ENCODE measurements at regions of chr1 and their contacts with region 1.

Region 1: GRCh38 chr1:243837907-243838535 is 12.0 kb downstream of the AKT3 start:
- DNase-seq: peak in 7 of 9 donors; percentile 22 to 72 (median 49)
- ATAC-seq: peak; percentile 88
- H3K4me3 ChIP-seq: no peak overlapping the region
- H3K4me3 Mint-ChIP-seq: peak overlapping the region in 9 of 10 donors; percentile 22 to 74 (median 58)
- H3K27ac ChIP-seq: peak overlapping the region; percentile 40
- H3K27ac Mint-ChIP-seq: peak overlapping the region; percentile 65 to 94 (median 83)
- H3K4me1 ChIP-seq: peaks cover 10 to 29% of the 10 kb centered on the region in 2 donors
- H3K4me1 Mint-ChIP-seq: peaks cover 14 to 73% (median 59%) of the 10 kb centered on the region in 7 donors
- H3K27me3 ChIP-seq: no peaks in the 10 kb centered on the region
- H3K27me3 Mint-ChIP-seq: no peaks in the 10 kb centered on the region

Region 2: DNA sequence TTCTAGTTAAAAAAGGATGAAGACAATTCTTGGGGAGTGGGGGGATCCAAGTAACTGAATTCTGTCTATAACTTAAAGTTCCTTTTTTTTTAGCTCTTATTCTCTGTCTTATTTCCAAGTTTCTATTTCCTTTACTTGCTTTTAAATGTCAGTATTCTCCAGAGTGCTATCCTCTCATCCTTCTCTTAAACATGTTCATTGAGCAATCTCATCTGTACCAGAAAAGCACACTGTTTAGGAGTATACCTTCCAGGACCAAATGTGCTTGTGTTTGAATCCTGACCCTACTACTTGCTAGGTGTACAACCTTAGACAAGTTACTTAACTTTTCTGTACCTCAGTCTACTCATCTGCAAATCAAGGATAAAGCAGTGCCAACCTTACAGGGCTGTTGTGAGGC is 38.1 kb before region 1 on chr1:
- CTCF ChIA-PET with region 1: no interaction called
- POLR2A ChIA-PET with region 1: no interaction called
- intact Hi-C with region 1: loop called in 1 of 2 experiments (anchors 5 kb)
- DNase-seq: no peak
- ATAC-seq: no peak
- H3K4me3 ChIP-seq: no peak overlapping the region
- H3K4me3 Mint-ChIP-seq: no peak overlapping the region
- H3K27ac ChIP-seq: no peak overlapping the region
- H3K27ac Mint-ChIP-seq: peak overlapping the region in 2 of 9 donors; percentile 4 to 23
- H3K4me1 ChIP-seq: no peaks in the 10 kb centered on the region
- H3K4me1 Mint-ChIP-seq: peaks cover 19 to 74% (median 56%) of the 10 kb centered on the region in 7 donors
- H3K27me3 ChIP-seq: no peaks in the 10 kb centered on the region
- H3K27me3 Mint-ChIP-seq: no peaks in the 10 kb centered on the region

Region 3: DNA sequence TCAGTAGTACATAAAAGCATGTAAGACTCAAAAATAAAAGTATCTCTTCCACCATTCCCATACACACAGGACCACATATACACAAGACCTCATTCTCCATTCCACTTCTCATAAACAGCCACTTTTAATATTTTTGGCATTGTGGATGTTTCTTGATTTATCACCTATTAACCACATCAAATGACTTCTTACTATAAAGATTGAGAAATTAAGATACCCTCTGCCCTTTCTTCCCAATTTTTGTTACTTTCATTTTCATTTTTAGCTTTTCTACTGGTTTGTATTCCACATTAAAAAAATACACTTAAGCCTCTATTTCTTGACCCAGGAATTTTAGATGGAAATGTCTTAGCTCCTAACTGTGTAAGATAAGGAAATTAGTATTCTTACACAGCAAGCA is 10.8 kb before region 1 on chr1:
- CTCF ChIA-PET with region 1: no interaction called
- POLR2A ChIA-PET with region 1: interaction called, 5 read pairs
- intact Hi-C with region 1: loop called in 1 of 2 experiments (anchors 2 kb)
- DNase-seq: no peak
- ATAC-seq: no peak
- H3K4me3 ChIP-seq: no peak overlapping the region
- H3K4me3 Mint-ChIP-seq: peak overlapping the region in 9 of 10 donors; percentile 29 to 71 (median 50)
- H3K27ac ChIP-seq: no peak overlapping the region
- H3K27ac Mint-ChIP-seq: peak overlapping the region in 3 of 9 donors; percentile 33 to 78 (median 52)
- H3K4me1 ChIP-seq: peaks cover 5 to 8% of the 10 kb centered on the region in 2 donors
- H3K4me1 Mint-ChIP-seq: peaks cover 13 to 73% (median 62%) of the 10 kb centered on the region in 7 donors
- H3K27me3 ChIP-seq: no peaks in the 10 kb centered on the region
- H3K27me3 Mint-ChIP-seq: no peaks in the 10 kb centered on the region